ENCODE measurements at regions of chr11 and their contacts with region 1.

Region 1: GRCh38 chr11:75113030-75113429 is 16.4 kb upstream of the OR2AT4 start:
- H3K4me3 Mint-ChIP-seq: no peak overlapping the region
- H3K27ac Mint-ChIP-seq: no peak overlapping the region
- H3K4me1 Mint-ChIP-seq: no peaks in the 10 kb centered on the region
- H3K27me3 Mint-ChIP-seq: peaks cover 20% of the 10 kb centered on the region

Region 2: GRCh38 chr11:75063732-75064314 is 49.2 kb before region 1 on chr11:
- intact Hi-C with region 1: loop called (anchors 10 kb)
- H3K4me3 Mint-ChIP-seq: no peak overlapping the region
- H3K27ac Mint-ChIP-seq: no peak overlapping the region
- H3K4me1 Mint-ChIP-seq: no peaks in the 10 kb centered on the region
- H3K27me3 Mint-ChIP-seq: peaks cover 24% of the 10 kb centered on the region

Region 3: GRCh38 chr11:75078233-75078632 is 34.8 kb before region 1 on chr11:
- intact Hi-C with region 1: no loop called
- H3K4me3 Mint-ChIP-seq: no peak overlapping the region
- H3K27ac Mint-ChIP-seq: no peak overlapping the region
- H3K4me1 Mint-ChIP-seq: peaks cover 5% of the 10 kb centered on the region
- H3K27me3 Mint-ChIP-seq: peaks cover 23% of the 10 kb centered on the region

Region 4: DNA sequence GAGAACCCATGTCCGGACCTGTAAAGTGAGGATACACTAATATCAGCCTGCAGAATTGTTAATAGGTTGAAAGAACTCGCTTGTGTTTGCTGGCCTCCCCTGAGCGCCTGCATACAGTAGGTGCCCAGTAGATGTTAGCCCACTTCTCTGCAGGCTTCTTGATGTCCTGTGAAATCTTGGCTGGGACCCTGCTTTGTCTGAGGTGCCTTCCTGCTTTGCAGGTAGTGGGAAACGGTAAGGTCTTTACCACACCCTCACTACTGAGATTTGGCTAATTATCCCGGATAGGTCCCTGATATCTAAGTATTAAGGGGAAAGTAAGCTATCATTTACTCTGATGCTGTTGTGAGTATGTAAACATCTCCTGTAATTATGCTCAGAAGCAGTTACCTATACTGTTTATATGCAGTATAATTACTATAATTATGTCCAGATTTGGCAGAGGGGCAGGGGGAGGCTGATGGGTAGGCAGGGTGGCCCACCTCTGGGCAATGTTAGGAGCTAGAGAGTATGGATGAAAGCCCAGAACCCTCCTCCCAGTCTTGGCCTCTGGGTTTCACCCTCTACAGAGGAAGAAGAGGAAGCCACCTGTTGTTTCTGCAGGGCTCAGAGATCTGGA is 239.7 kb after region 1 on chr11:
- intact Hi-C with region 1: no loop called
- H3K4me3 Mint-ChIP-seq: peak overlapping the region; percentile 94
- H3K27ac Mint-ChIP-seq: peak overlapping the region; percentile 87
- H3K4me1 Mint-ChIP-seq: peaks cover 71% of the 10 kb centered on the region
- H3K27me3 Mint-ChIP-seq: peaks cover 3% of the 10 kb centered on the region